ENCODE measurements at regions of chr13 and their contacts with region 1.

Region 1: DNA sequence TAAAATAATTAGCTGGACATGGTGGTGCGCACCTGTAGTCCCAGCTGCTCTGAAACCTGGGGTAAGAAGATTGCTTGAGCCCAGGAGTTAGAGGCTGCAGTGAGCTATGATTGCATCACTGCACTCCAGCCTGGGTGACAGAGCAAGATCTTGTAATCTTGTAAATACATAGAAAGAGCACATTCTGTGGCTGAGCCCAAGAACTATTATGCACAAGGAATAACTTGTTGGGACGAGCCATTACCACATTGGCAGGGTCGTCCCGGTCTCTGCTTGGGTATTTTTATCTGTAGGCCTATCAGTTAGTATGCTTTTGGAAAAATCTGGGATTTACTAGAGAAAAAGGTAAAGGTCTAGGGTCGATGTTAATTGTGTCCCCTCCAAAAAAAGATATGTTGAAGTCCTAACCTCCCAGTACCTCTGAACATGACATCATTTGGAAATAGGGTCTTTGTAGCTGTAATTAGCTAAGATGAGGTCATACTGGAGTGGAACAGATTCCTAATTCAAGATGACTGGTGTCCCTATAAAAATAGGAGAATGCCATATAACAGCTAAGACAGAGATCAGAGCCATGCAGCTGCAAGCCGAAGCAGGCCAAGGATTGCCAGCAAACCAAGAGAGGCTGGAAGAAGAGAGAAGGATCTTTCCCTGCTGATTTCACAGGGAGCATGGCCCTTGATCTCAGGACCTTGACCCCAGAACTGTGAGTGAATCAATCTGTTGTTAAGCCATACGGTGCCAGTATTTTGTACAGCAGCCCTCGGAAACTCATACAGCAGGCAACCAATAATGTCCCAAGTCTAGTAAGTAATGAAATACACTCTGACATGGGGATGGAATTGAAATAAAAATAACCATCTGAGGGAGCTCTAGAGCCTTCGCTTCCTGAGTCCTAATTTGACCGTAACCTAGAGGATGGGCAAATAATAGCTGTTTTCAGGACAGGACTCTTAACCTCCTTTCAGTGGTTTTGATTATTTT is 77.0 kb downstream of the TM9SF2 start:
- DNase-seq: peak; percentile 29
- H3K4me3 ChIP-seq: no peak overlapping the region
- H3K27ac ChIP-seq: no peak overlapping the region
- H3K4me1 ChIP-seq: no peaks in the 10 kb centered on the region
- H3K27me3 ChIP-seq: peaks cover 0 to 6% of the 10 kb centered on the region in 2 experiments
- CTCF ChIP-seq: peak in 1 of 2 donors; percentile 25
- POLR2A ChIP-seq: no peak

Region 2: GRCh38 chr13:99558570-99559180 is 19.6 kb before region 1 on chr13:
- CTCF ChIA-PET with region 1: interaction called, 12 read pairs
- POLR2A ChIA-PET with region 1: no interaction called
- dilution Hi-C with region 1: no loop called
- intact Hi-C with region 1: no loop called
- DNase-seq: no peak
- H3K4me3 ChIP-seq: no peak overlapping the region
- H3K27ac ChIP-seq: no peak overlapping the region
- H3K4me1 ChIP-seq: no peaks in the 10 kb centered on the region
- H3K27me3 ChIP-seq: no peaks in the 10 kb centered on the region
- CTCF ChIP-seq: no peak
- POLR2A ChIP-seq: no peak

Region 3: DNA sequence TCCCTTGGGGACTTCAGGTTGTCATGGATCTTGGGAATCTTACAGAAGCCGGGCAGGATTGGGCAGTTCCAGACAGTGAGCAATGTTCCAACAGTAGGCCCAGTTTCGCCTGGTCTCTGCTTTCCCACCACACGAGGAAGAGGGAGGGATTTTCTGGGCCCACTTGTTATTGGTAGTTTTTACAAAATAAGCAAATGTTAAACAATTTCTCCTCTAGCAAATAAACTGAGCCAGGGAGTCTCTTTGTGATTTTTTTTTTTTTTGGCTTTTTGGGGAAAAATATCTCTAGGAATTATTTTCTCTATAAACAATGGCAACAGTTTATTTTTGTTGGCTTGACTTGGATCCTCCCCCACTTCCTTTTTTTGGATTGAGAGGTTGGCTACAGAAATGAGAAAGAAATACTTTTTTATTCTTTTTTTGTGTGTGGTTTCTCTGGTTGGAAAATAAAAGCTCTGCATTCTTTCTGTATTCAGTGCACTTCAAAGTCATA is 12.3 kb after region 1 on chr13:
- CTCF ChIA-PET with region 1: interaction called, 10 read pairs
- POLR2A ChIA-PET with region 1: no interaction called
- dilution Hi-C with region 1: no loop called
- intact Hi-C with region 1: no loop called
- DNase-seq: peak; percentile 80
- H3K4me3 ChIP-seq: no peak overlapping the region
- H3K27ac ChIP-seq: no peak overlapping the region
- H3K4me1 ChIP-seq: peaks cover 13% of the 10 kb centered on the region
- H3K27me3 ChIP-seq: peaks cover 0 to 8% of the 10 kb centered on the region in 2 experiments
- CTCF ChIP-seq: no peak
- POLR2A ChIP-seq: no peak

Region 4: GRCh38 chr13:99606324-99607066 is 28.3 kb after region 1 on chr13:
- CTCF ChIA-PET with region 1: interaction called, 14 read pairs
- POLR2A ChIA-PET with region 1: no interaction called
- dilution Hi-C with region 1: no loop called
- intact Hi-C with region 1: no loop called
- DNase-seq: peak; percentile 81
- H3K4me3 ChIP-seq: peak within 1 kb of the TSS; percentile 53 to 92 (median 68)
- H3K27ac ChIP-seq: peak within 1 kb of the TSS; percentile 25
- H3K4me1 ChIP-seq: peaks cover 9% of the 10 kb centered on the region
- H3K27me3 ChIP-seq: peaks cover 0 to 4% of the 10 kb centered on the region in 2 experiments
- CTCF ChIP-seq: peak in 1 of 2 donors; percentile 8
- POLR2A ChIP-seq: peak; percentile 81

Region 5: GRCh38 chr13:99614385-99614885 is 36.2 kb after region 1 on chr13:
- CTCF ChIA-PET with region 1: interaction called, 14 read pairs
- POLR2A ChIA-PET with region 1: no interaction called
- dilution Hi-C with region 1: no loop called
- intact Hi-C with region 1: loop called (anchors 2 kb)
- DNase-seq: peak; percentile 45
- H3K4me3 ChIP-seq: no peak overlapping the region
- H3K27ac ChIP-seq: no peak overlapping the region
- H3K4me1 ChIP-seq: no peaks in the 10 kb centered on the region
- H3K27me3 ChIP-seq: no peaks in the 10 kb centered on the region
- CTCF ChIP-seq: peak in 1 of 2 donors; percentile 50
- POLR2A ChIP-seq: no peak

Region 6: GRCh38 chr13:99636728-99637353 is 58.6 kb after region 1 on chr13:
- CTCF ChIA-PET with region 1: no interaction called
- POLR2A ChIA-PET with region 1: no interaction called
- dilution Hi-C with region 1: no loop called
- intact Hi-C with region 1: no loop called
- DNase-seq: no peak
- H3K4me3 ChIP-seq: no peak overlapping the region
- H3K27ac ChIP-seq: no peak overlapping the region
- H3K4me1 ChIP-seq: no peaks in the 10 kb centered on the region
- H3K27me3 ChIP-seq: peaks cover 0 to 2% of the 10 kb centered on the region in 2 experiments
- CTCF ChIP-seq: no peak
- POLR2A ChIP-seq: no peak